ENCODE measurements at regions of chr3 and their contacts with region 1.

Region 1: GRCh38 chr3:42122651-42123581 is 31.8 kb downstream of the TRAK1 start:
- DNase-seq: no peak
- ATAC-seq: peak in 1 of 2 donors; percentile 8
- H3K4me3 ChIP-seq: no peak overlapping the region
- H3K27ac ChIP-seq: no peak overlapping the region
- H3K4me1 ChIP-seq: peaks cover 48% of the 10 kb centered on the region
- H3K27me3 ChIP-seq: no peaks in the 10 kb centered on the region
- CTCF ChIP-seq: no peak

Region 2: DNA sequence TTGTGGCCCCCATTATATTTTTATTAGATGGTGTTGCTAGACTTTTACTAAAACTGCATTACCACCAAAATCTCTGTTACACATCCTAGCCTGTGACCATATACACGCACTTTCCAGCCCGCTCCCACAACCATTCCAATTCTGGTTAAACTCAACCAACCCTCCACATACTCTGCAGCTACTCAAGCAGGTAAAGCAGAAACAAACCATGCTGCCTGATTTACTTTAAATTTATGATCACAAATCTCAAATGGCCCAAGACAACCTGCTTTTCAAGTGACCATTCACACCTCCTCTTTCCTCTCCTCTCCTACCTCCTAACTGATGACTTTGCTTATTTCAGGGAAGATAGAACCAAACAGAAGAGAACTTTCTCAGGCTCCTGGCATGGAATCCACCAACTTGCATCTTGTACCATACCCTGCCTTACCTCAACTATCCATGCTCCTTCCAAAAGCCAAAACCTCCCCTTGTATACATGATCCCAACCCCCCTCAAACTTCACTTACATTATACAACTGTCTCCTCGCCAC is 179.5 kb before region 1 on chr3:
- intact Hi-C with region 1: no loop called
- DNase-seq: no peak
- ATAC-seq: no peak
- H3K4me3 ChIP-seq: no peak overlapping the region
- H3K27ac ChIP-seq: no peak overlapping the region
- H3K4me1 ChIP-seq: no peaks in the 10 kb centered on the region
- H3K27me3 ChIP-seq: no peaks in the 10 kb centered on the region
- CTCF ChIP-seq: no peak

Region 3: GRCh38 chr3:42179110-42179725 is 56.3 kb after region 1 on chr3:
- intact Hi-C with region 1: loop called (anchors 10 kb)
- DNase-seq: no peak
- ATAC-seq: peak; percentile 67 to 78
- H3K4me3 ChIP-seq: no peak overlapping the region
- H3K27ac ChIP-seq: peak overlapping the region; percentile 26
- H3K4me1 ChIP-seq: peaks cover 18% of the 10 kb centered on the region
- H3K27me3 ChIP-seq: no peaks in the 10 kb centered on the region
- CTCF ChIP-seq: no peak